WTC11 (cell line): ENCODE measurements at regions of chr17 and their contacts with region 1.

Region 1: GRCh38 chr17:76557368-76558197 is 17.7 kb downstream of the PRCD start:
- DNase-seq: peak; percentile 97
- ATAC-seq: peak; percentile 97
- H3K4me3 Mint-ChIP-seq: peak overlapping the region; percentile 97
- H3K27ac Mint-ChIP-seq: peak overlapping the region; percentile 97
- H3K4me1 Mint-ChIP-seq: peaks cover 43% of the 10 kb centered on the region
- H3K27me3 Mint-ChIP-seq: no peaks in the 10 kb centered on the region
- CTCF ChIP-seq: peak; percentile 31; the same call in 1 of the 2 replicates

Region 2: DNA sequence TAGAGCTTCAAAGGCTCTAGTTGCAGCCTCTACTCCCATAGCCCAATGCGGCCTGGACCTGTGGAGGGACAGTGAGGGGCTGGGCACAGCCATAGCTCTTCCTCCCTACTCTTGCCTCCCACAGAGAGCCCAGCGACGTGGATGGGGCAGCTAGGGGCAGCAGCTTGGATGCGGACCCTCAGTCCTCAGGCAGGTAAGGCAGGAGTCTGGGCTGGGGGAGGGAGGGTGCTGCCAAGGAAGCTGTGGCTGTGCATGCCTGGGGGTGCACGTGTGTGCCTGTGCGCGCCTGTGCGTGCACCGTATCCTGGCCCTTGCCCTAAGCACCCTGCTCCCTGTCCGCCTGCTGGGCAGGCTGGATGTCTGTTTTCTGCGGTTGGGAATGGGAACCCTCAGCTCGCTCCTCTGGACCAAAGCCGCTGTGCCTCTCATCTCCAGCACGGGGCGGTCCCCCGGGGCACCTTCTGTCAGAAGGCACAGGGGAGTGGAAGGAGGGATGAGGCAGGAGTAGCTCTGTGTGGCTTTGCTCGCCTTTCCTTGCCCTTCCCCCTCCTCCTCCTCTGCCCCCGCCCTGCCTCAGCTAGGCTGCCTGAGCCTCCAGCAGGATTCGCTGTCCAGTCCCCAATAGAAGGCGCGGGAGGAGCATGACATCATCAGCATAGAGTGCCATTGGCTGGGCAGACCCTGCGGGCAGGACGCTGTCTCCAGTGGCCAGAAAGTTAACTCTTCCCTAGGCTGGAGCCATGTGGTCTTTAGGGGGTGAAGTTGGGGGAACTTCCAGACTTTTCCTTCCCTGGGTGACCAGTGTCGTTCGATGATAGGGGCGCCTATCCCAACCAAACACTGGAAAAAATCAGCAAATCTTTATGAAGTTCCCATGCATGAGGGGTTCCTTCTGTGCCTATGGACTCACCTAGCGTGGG is 16.9 kb before region 1 on chr17:
- CTCF ChIA-PET with region 1: interaction called, 26 read pairs
- POLR2A ChIA-PET with region 1: interaction called, 4 read pairs
- DNase-seq: peak; percentile 95
- ATAC-seq: peak; percentile 91
- H3K4me3 Mint-ChIP-seq: peak overlapping the region; percentile 74
- H3K27ac Mint-ChIP-seq: peak overlapping the region; percentile 80
- H3K4me1 Mint-ChIP-seq: peaks cover 40% of the 10 kb centered on the region
- H3K27me3 Mint-ChIP-seq: peaks cover 43% of the 10 kb centered on the region
- CTCF ChIP-seq: no peak

Region 3: GRCh38 chr17:76547184-76547641 is 10.4 kb before region 1 on chr17:
- CTCF ChIA-PET with region 1: interaction called, 14 read pairs
- POLR2A ChIA-PET with region 1: interaction called, 4 read pairs
- DNase-seq: peak; percentile 67
- ATAC-seq: peak; percentile 76
- H3K4me3 Mint-ChIP-seq: no peak overlapping the region
- H3K27ac Mint-ChIP-seq: no peak overlapping the region
- H3K4me1 Mint-ChIP-seq: peaks cover 22% of the 10 kb centered on the region
- H3K27me3 Mint-ChIP-seq: peaks cover under 1% of the 10 kb centered on the region; the same call in 1 of the 2 replicates
- CTCF ChIP-seq: peak; percentile 48

Region 4: GRCh38 chr17:76567634-76568432 is 10.2 kb after region 1 on chr17:
- CTCF ChIA-PET with region 1: interaction called, 27 read pairs
- POLR2A ChIA-PET with region 1: interaction called, 4 read pairs
- DNase-seq: no peak
- ATAC-seq: peak; percentile 23
- H3K4me3 Mint-ChIP-seq: no peak overlapping the region
- H3K27ac Mint-ChIP-seq: peak overlapping the region; percentile 84
- H3K4me1 Mint-ChIP-seq: peaks cover 38% of the 10 kb centered on the region
- H3K27me3 Mint-ChIP-seq: no peaks in the 10 kb centered on the region
- CTCF ChIP-seq: no peak

Region 5: DNA sequence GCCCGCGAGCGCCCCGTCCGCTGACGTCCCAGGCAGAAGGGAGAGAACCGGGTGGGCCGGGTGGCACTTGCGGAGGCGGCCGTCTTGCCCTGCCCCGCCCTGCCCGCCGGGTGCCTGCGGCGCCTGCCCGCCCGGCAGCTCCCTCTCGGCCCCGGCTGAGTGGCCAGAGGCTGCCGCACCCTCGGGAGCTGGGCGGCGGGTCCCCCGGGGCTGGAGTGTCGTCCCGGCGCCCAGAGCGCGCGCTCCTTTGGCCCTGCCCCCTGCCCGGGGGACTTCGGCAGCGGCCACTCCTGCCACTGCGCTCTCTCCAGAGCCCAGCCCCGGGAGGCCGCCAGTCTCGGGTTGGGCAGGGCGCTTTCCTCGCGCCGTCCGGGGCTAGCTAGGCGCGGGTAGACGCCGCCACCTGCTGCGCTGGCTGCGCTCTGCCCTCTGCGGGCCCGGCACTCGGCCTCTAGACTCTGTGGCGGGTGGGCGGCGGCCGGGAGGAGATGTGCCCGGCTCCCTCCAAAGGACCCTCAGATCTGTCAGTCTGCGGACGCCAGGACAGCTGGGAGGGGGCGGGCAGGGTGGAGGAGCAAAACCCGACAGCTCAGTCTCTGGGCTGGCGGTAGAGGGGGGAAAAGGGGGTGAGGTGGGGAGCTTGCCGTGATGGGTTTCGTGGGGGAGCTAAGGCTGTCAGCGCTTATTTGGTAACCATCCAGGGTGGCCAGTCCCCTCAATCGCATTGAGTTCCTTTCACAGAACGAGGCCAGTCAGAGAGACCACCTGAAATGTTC is 28.4 kb after region 1 on chr17 and contains the start of gene ST6GALNAC2:
- CTCF ChIA-PET with region 1: interaction called, 10 read pairs
- POLR2A ChIA-PET with region 1: no interaction called
- DNase-seq: peak; percentile 37
- ATAC-seq: peak; percentile 33
- H3K4me3 Mint-ChIP-seq: peak within 1 kb of the TSS; percentile 71
- H3K27ac Mint-ChIP-seq: no peak within 1 kb of the TSS
- H3K4me1 Mint-ChIP-seq: peaks cover 18% of the 10 kb centered on the region
- H3K27me3 Mint-ChIP-seq: peaks cover 84% of the 10 kb centered on the region
- CTCF ChIP-seq: no peak
- total RNA-seq, gene ST6GALNAC2: 0.30 TPM in 1 of 3 replicates, not detected in the others

Region 6: DNA sequence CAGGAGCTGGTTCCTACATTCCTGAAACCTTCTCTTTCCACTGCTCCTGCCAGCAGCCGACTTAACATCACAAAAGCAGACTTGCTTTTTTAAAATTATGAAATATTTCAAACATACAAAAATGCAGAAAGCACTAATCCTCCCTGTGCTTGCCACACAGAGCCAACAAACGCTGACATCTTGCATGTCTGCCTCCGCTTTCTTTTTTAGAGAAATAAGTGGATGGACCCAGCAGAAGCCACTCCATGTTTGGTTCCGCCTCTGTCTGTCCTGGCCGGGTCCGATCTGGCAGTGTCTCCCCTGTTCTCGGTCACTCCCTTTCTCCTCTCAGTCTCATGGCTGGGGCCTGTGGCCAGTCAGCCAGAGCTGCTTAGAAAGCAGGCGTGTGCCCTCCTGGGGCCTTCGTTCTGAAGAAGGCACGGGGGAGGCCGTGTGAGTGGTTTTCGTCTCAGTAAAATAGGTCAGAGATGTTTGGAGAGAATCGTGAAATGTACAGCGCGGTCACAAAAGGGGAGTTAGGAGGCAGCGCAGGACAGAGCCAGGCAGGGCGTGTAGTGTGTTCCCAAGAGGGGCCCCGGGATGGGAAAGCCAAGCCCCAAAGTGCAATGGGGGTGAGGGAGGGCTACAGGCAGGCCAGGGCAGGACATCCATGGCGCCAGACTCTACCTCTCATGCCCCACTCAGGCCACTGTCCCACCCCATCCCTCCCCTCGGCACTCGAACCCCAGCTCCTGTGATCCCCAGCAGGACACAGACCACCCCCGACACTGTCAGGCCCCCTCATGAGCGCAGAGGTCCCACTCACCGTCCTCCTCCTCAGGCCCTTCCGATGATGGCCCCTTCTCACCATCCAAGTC is 130.0 kb after region 1 on chr17:
- CTCF ChIA-PET with region 1: no interaction called
- POLR2A ChIA-PET with region 1: no interaction called
- DNase-seq: no peak
- ATAC-seq: no peak
- H3K4me3 Mint-ChIP-seq: no peak overlapping the region
- H3K27ac Mint-ChIP-seq: peak overlapping the region; percentile 89
- H3K4me1 Mint-ChIP-seq: peaks cover 16% of the 10 kb centered on the region
- H3K27me3 Mint-ChIP-seq: no peaks in the 10 kb centered on the region
- CTCF ChIP-seq: no peak

Region 7: GRCh38 chr17:76755285-76755684 is 197.7 kb after region 1 on chr17:
- CTCF ChIA-PET with region 1: no interaction called
- POLR2A ChIA-PET with region 1: no interaction called
- DNase-seq: no peak
- ATAC-seq: no peak
- H3K4me3 Mint-ChIP-seq: no peak overlapping the region
- H3K27ac Mint-ChIP-seq: no peak overlapping the region
- H3K4me1 Mint-ChIP-seq: no peaks in the 10 kb centered on the region
- H3K27me3 Mint-ChIP-seq: no peaks in the 10 kb centered on the region
- CTCF ChIP-seq: no peak